ENCODE measurements at regions of chr16 and their contacts with region 1.

Region 1: GRCh38 chr16:82229796-82230619 is 60.0 kb upstream of the MPHOSPH6 start:
- DNase-seq: peak; percentile 56
- H3K4me3 ChIP-seq: no peak overlapping the region
- H3K27ac ChIP-seq: no peak overlapping the region
- H3K27me3 ChIP-seq: peaks cover 3% of the 10 kb centered on the region
- CTCF ChIP-seq: peak; percentile 97

Region 2: GRCh38 chr16:81831722-81832126 is 398.3 kb before region 1 on chr16:
- CTCF ChIA-PET with region 1: interaction called, 10 read pairs
- POLR2A ChIA-PET with region 1: no interaction called
- DNase-seq: no peak
- H3K4me3 ChIP-seq: no peak overlapping the region
- H3K27ac ChIP-seq: no peak overlapping the region
- H3K27me3 ChIP-seq: no peaks in the 10 kb centered on the region
- CTCF ChIP-seq: no peak

Region 3: GRCh38 chr16:81888495-81889410 is 341.3 kb before region 1 on chr16:
- CTCF ChIA-PET with region 1: interaction called, 43 read pairs
- POLR2A ChIA-PET with region 1: no interaction called
- DNase-seq: no peak
- H3K4me3 ChIP-seq: no peak overlapping the region
- H3K27ac ChIP-seq: no peak overlapping the region
- H3K27me3 ChIP-seq: peaks cover 4% of the 10 kb centered on the region
- CTCF ChIP-seq: no peak

Region 4: GRCh38 chr16:81940781-81941560 is 289.0 kb before region 1 on chr16:
- CTCF ChIA-PET with region 1: interaction called, 90 read pairs
- POLR2A ChIA-PET with region 1: no interaction called
- DNase-seq: peak; percentile 2
- H3K4me3 ChIP-seq: no peak overlapping the region
- H3K27ac ChIP-seq: no peak overlapping the region
- H3K27me3 ChIP-seq: no peaks in the 10 kb centered on the region
- CTCF ChIP-seq: peak; percentile 51

Region 5: DNA sequence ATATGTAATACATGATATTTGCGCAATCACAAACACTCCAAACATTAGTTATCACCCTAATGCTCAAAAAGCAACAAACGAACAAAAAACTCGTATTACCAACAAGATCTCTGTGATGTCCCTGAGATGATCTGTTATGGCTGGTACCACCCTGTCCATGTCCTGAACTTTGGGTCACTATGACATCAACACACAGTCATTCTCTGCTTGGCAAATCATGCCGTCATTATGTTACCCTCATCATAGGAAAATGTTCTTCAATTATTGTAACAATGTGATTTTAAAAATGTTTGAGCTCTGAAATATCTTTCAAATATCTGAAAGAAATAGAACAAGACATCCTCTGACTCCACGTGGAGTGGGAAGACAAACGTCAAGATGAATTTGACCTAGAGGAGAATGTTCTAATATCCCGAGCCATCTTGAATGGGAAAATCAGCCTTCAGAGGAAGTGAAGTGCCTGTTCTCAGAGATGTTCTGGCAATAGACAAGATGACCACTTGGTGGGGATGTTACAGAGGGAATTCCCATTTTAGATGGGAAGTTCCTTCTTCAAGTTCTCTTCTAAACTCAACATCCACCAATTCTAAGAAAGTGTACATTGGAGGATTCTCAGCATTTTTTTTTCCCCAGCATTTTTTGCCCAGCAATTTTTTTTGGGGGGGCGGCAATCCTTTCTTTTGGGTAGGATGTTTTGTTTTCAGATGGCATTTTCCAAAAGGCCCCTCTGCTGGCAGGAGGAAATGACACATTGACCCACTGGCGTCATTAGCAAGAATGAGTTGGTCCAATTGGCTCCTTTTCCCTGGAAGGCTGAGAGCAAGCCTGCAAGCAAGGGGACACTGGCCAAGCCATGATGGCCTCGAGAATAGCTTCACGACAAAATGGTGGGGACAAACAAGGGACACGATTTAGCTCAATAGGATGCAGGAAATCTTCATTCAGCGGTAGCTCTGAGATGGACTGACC is 198.6 kb before region 1 on chr16:
- CTCF ChIA-PET with region 1: interaction called, 84 read pairs
- POLR2A ChIA-PET with region 1: no interaction called
- DNase-seq: peak; percentile 27
- H3K4me3 ChIP-seq: no peak overlapping the region
- H3K27ac ChIP-seq: no peak overlapping the region
- H3K27me3 ChIP-seq: no peaks in the 10 kb centered on the region
- CTCF ChIP-seq: peak; percentile 62

Region 6: GRCh38 chr16:82037666-82038065 is 192.3 kb before region 1 on chr16:
- CTCF ChIA-PET with region 1: interaction called, 84 read pairs
- POLR2A ChIA-PET with region 1: no interaction called
- DNase-seq: peak; percentile 26
- H3K4me3 ChIP-seq: no peak overlapping the region
- H3K27ac ChIP-seq: no peak overlapping the region
- H3K27me3 ChIP-seq: no peaks in the 10 kb centered on the region
- CTCF ChIP-seq: no peak

Region 7: GRCh38 chr16:82240111-82240510 is 10.1 kb after region 1 on chr16:
- CTCF ChIA-PET with region 1: interaction called, 10 read pairs
- POLR2A ChIA-PET with region 1: no interaction called
- DNase-seq: no peak
- H3K4me3 ChIP-seq: no peak overlapping the region
- H3K27ac ChIP-seq: no peak overlapping the region
- H3K27me3 ChIP-seq: peaks cover 3% of the 10 kb centered on the region
- CTCF ChIP-seq: no peak